WTC11 (cell line): ENCODE measurements at regions of chr22 and their contacts with region 1.

Region 1: GRCh38 chr22:21938071-21938822 is 14.4 kb downstream of the PPM1F start:
- DNase-seq: peak; percentile 97
- ATAC-seq: peak; percentile 94
- H3K4me3 Mint-ChIP-seq: peak overlapping the region; percentile 85
- H3K27ac Mint-ChIP-seq: peak overlapping the region; percentile 84
- H3K4me1 Mint-ChIP-seq: peaks cover 8% of the 10 kb centered on the region
- H3K27me3 Mint-ChIP-seq: no peaks in the 10 kb centered on the region
- CTCF ChIP-seq: peak; percentile 100

Region 2: DNA sequence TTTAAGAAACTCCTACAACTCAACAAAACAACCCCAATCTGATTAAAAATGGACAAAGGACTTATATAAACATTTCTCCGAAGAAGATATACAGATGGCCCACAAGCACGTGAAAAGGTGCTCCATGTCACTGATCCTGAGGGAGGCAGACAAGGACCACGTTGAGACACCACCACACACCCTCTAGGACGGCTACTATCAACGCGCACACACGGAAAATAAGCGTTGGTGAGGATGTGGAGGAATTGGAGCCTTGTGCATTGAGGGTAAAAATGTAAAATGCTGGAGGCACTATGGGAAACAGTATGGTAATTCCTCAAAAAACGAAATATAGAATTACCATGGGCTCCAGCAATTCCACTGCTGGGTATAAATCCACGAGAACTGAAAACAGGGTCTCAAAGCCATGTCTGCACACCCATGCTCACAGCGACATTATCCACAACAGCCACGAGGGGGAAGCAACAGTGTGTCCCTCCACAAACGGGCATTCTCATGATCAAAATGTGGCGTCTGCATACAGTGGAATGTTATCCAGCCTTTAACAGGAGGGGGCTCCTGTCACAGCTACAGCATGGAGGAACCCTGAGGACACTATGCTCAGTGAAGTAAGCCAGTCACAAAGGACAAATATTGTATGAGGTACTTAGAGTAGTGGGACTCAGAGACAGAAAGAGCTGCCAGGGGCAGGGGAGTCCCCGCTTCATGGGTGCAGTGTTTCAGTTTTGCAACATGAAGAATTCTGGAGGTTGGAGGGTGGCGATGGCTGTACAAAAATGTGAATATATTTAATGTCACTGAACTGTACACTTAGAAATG is 225.1 kb before region 1 on chr22:
- CTCF ChIA-PET with region 1: interaction called, 15 read pairs
- POLR2A ChIA-PET with region 1: no interaction called
- DNase-seq: peak; percentile 60
- ATAC-seq: peak; percentile 97
- H3K4me3 Mint-ChIP-seq: no peak overlapping the region
- H3K27ac Mint-ChIP-seq: 0 out of 2 replicates have a peak overlapping the region, but pooled peaks have one; percentile 29
- H3K4me1 Mint-ChIP-seq: peaks cover 3% of the 10 kb centered on the region; the same call in 1 of the 2 replicates
- H3K27me3 Mint-ChIP-seq: no peaks in the 10 kb centered on the region
- CTCF ChIP-seq: peak; percentile 40

Region 3: DNA sequence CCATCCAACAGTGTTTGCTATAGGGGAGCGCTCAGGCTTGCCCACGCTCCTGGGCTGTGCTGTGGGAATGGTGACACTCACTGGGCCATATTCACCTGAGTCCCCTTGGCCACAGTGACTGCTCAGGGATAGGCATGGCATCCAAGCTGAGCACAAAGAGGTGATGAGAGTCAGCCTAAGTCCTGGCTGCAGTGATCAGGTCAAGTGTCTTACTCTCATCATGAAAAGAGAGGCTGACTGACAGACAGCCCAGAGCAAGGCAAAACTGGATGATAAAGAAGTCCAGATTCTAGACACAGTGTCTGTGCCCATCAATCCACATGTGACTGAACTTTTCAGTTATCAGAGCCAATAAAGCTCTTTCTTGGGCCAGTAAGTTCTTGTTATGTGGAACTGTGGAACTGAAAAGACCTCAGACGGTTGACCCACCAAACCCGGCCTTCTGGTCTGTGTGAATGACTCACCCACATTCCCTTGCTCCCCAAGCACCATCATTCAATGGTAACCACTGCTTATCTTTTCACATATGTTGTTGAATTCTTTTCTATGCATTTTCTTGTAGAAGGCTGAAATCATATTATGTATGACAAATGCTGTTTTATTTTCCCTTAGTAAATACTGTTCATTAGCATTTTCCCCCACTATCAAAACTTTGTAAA is 159.4 kb before region 1 on chr22:
- CTCF ChIA-PET with region 1: interaction called, 14 read pairs
- POLR2A ChIA-PET with region 1: no interaction called
- DNase-seq: no peak
- ATAC-seq: no peak
- H3K4me3 Mint-ChIP-seq: no peak overlapping the region
- H3K27ac Mint-ChIP-seq: no peak overlapping the region
- H3K4me1 Mint-ChIP-seq: no peaks in the 10 kb centered on the region
- H3K27me3 Mint-ChIP-seq: no peaks in the 10 kb centered on the region
- CTCF ChIP-seq: no peak

Region 4: DNA sequence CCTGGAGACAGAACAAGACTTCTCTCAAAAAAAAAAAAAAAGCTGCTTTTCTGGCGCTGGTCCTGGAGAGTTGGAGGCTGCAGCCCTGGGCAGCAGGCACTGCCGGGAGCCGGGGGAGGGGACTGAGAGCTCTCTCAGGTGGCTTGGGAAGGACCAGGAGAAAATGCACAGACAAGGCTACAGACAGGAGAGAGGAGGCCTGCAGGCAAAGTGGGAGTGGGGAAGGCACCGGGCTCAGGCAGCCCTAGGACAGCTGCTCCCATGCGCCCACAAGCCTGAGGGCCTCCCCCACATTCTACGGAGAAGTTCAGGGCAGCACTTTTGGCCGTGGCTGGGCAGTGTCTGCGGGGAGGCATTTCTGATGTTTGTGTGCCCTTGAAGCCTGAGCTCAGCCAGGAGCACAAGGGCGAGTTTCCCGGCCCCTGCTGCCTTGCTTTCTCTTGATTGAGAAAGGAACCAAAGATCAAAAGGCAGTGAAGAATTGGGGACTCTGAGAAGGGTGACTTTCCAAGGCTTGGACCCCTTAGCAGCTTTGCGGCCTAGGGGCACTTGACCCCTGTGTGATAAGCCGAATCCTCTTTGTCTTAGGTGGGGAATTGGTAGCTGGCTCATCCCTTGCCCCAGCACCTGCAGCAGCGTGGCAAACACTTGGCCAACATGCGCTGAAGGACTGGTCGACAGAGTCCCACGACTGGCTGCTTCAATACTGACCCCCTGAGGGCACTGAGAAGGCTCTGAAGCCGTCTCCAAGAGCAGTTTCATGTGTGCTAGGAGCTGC is 20.9 kb before region 1 on chr22:
- CTCF ChIA-PET with region 1: interaction called, 44 read pairs
- POLR2A ChIA-PET with region 1: no interaction called
- DNase-seq: peak; percentile 41
- ATAC-seq: peak; percentile 32
- H3K4me3 Mint-ChIP-seq: no peak overlapping the region
- H3K27ac Mint-ChIP-seq: peak overlapping the region; percentile 86; the same call in 1 of the 2 replicates
- H3K4me1 Mint-ChIP-seq: peaks cover 45% of the 10 kb centered on the region
- H3K27me3 Mint-ChIP-seq: no peaks in the 10 kb centered on the region
- CTCF ChIP-seq: no peak

Region 5: GRCh38 chr22:21952586-21953571 is 14.6 kb after region 1 on chr22 and contains the start of gene PPM1F:
- CTCF ChIA-PET with region 1: interaction called, 121 read pairs
- POLR2A ChIA-PET with region 1: no interaction called
- DNase-seq: peak; percentile 86
- ATAC-seq: peak; percentile 77
- H3K4me3 Mint-ChIP-seq: peak within 1 kb of the TSS; percentile 76
- H3K27ac Mint-ChIP-seq: no peak within 1 kb of the TSS
- H3K4me1 Mint-ChIP-seq: peaks cover 8% of the 10 kb centered on the region
- H3K27me3 Mint-ChIP-seq: peaks cover 26% of the 10 kb centered on the region
- CTCF ChIP-seq: peak; percentile 92
- total RNA-seq, gene PPM1F: 23.9 to 30.6 TPM (median 28.6 TPM) in 3 replicates

Region 6: DNA sequence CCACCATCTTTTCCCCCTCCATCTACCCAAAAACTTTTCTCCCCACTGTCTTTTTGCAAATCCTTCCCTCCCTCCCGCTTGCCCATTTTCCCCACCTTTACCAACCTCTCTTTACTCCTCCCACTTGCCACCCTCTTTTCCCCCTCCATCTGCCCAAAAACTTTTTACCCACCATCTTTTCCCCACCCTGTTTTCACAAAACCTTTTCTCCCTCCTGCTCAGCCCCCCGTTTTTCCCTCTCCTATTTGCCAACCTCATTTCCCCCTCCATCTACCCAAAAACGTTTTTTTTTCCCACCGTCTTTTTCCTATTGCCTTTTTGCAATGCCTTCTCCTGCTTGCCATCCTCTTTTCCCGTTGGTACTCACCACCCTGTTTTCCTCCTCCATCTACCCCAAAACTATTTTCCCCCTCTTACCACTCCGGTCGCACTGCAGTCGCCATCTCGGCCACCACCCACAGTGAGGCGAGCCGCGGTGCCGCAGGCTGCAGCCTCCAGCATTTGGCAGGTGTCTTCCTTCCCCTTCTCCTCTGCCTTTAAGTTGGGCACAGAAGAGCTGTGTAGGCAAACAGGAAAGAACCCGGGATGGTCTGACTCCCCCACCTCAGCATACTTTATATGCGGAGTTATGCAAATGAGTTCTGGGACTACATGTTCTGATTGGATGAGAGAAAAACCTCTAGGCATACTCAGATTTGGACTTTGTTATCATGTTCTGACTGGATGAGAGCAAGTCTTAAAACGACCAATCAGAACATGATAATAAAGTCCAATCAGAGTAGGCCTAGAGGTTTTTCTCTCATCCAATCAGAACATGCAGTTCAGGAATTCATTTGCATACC is 185.1 kb after region 1 on chr22:
- CTCF ChIA-PET with region 1: no interaction called
- POLR2A ChIA-PET with region 1: no interaction called
- DNase-seq: no peak
- ATAC-seq: no peak; the same call in 1 of the 2 replicates
- H3K4me3 Mint-ChIP-seq: no peak overlapping the region
- H3K27ac Mint-ChIP-seq: no peak overlapping the region
- H3K4me1 Mint-ChIP-seq: 0 out of 2 replicates have a peak, but pooled peaks cover 9% of the 10 kb centered on the region
- H3K27me3 Mint-ChIP-seq: peaks cover 95% of the 10 kb centered on the region
- CTCF ChIP-seq: no peak